ENCODE measurements at regions of chr6 and their contacts with region 1.

Region 1: GRCh38 chr6:137878486-137879285 is 11.6 kb downstream of the TNFAIP3 start:
- DNase-seq: peak; percentile 86
- ATAC-seq: peak; percentile 95
- H3K4me3 Mint-ChIP-seq: peak overlapping the region; percentile 41
- H3K27ac Mint-ChIP-seq: no peak overlapping the region
- H3K4me1 Mint-ChIP-seq: peaks cover 42% of the 10 kb centered on the region
- H3K27me3 Mint-ChIP-seq: no peaks in the 10 kb centered on the region
- CTCF ChIP-seq: no peak

Region 2: GRCh38 chr6:137866914-137867684 is 11.6 kb before region 1 on chr6 and contains the start of gene TNFAIP3:
- CTCF ChIA-PET with region 1: interaction called, 54 read pairs
- POLR2A ChIA-PET with region 1: interaction called, 6 read pairs
- DNase-seq: peak; percentile 77
- ATAC-seq: peak; percentile 72
- H3K4me3 Mint-ChIP-seq: peak within 1 kb of the TSS; percentile 87
- H3K27ac Mint-ChIP-seq: 0 out of 2 replicates have a peak within 1 kb of the TSS, but pooled peaks have one; percentile 58
- H3K4me1 Mint-ChIP-seq: peaks cover 44% of the 10 kb centered on the region
- H3K27me3 Mint-ChIP-seq: peaks cover 31% of the 10 kb centered on the region
- CTCF ChIP-seq: peak; percentile 85
- total RNA-seq, gene TNFAIP3: 3.0 to 4.7 TPM (median 4.2 TPM) in 3 replicates

Measured in WTC11 (cell line).